GM18951 (cell line): ENCODE measurements at regions of chr17 and their contacts with region 1.

Region 1: DNA sequence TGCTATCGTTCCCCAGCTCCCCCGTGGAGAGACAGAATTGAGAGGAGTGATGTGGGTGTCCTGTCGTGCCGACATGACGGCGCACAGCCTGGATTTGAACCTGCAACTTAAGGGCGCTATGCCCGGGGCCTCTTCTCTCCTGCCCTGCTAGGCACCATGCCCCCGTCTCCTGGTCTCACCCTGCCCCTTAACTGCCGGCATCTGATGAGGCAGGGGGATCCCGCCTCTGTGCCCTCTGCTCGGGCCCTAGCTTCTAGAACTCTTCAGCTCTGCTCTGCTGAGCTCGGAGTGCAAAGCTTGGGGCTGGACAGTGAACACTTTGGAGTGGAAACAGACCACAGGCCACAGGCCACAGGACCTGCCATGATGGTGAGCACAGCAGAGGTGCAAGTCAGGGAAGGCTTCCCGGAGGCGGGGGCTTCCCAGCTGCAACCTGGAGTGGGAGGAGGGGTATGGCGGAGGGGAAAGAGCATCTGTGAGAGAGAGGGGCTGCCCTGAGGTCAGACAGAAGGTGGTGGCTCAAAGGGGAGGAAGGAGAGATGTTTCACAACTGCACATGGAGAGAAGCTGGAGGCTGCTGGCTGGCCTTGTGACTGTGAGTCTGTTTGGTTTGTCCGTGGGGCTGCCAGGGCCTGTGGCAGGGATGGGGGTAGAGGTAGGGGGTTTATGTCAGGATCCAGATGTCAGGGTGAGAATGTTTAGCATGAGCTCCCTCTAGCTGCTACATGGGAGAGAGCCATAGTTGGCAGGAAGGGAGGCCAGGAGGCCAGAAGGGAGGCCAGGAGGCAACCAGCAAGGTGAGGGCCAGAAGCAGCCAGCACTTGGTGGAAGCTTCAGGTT is 107.8 kb downstream of the CRLF3 start:
- POLR2A ChIP-seq: no peak

Region 2: DNA sequence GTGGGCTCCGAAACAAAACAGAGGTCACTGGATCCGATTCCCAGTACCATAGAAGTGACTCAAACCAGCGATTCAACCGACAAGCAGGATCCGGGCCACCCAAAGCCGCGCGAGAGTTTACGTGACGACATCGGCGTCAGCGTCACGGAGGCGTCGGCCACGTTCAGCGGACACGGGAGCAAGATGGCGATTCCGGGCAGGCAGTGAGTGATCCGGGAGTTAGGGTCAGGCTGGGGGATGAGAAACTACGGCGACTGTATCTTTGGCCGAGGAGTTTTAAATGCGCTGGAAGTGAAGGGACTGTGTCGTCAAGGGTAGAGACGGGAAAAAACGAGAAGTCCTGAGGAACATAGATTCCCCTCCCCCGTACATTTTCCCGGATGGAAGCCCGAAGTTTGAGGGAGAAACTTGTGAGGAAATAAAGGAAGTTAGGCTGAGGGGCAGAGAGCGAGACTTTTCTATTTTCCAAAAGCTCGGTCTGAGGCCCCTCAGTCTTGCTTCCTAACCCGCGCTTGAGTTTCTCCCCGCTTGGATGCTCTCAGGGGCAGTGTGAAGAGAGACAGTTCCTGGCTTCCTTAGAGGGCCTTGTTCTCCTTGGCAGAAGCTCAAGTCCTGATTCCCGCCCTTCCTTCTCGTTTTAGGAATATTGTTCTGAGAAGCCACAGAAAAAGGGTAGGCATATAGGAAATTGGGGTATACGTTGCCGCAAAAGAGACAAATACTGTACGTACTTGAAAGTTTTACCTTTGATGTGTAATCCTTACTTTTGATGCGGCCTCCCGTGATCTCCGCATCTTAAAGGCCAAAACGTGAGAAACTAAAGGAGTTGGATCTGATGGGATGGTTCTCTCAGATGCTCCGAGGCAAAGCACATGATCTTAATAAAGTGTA is 599.8 kb before region 1 on chr17 and contains the start of gene NSRP1:
- in situ Hi-C with region 1: loop called (anchors 25 kb)
- POLR2A ChIP-seq: peak; percentile 98

Region 3: DNA sequence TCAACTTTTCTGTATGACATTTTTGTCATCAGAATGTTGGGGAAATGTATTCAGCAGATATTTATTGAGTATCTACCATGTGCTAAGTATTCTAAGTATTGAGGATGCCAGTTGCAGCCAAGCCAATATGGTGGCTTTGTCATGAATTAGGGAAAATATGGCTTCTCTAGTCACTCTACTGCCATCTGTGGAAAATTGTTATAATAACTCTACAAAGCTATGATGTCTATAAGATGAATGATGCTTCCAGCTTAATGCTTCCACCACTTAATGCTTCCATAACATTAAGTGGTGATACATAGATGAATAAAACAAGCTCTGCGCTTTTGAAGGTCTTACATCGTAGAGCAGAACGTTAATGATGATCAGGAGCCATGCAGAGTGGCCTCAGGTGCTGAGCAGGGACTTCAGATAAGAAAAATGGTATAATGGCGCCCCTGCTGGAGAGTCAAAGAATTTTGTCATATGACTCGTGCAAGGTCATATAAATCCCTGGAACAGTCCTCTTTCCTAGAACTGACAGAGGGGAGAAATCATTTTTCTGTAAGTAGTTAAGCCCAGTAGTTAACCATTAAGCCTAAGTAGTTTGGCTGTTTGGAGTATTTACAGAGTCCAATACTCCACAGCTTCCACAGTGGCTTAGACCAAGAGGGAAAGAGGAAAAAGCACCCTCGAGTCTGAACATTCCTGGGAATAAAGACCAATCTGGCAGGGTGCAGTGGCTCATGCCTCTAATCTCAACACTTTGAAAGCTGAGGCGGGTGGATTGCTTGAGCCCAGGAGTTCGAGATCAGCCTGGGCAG is 380.1 kb before region 1 on chr17:
- in situ Hi-C with region 1: loop called (anchors 25 kb)
- POLR2A ChIP-seq: no peak

Region 4: DNA sequence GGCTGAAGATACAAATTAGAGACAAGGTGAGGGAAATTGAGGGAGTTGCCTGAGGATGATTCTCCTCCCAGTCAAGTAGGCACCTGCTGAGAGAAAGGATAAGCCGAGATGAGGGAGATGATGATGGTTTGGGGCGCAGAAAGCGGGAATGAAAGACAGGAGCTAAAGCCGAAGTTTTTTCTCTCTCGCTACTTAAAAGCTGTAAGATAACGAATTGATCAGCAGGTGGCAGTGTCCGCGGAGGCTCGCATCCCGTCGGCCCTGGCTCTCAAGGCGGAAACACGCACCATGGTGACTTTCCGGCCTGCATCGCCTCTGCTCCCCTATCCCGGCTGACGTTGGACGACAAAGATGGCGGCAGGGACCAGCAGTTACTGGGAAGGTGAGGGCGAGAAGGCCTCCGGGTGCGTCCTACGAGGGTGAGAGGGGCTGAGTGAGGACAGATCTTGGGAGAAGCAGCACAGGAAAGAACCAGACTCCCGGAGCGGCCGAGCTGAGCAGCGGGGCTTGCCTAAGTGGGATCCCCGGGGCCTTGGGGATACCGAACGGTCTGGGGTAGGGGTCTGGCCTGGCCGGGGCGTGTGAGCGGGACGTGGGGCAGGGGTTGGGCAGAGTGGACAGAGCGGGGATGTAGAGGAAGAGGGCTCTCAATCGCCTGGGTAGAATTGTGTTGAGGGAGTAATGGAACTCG is 239.5 kb before region 1 on chr17 and contains the start of gene GOSR1:
- in situ Hi-C with region 1: loop called (anchors 25 kb)
- POLR2A ChIP-seq: peak; percentile 92